ENCODE measurements at regions of chr18 and their contacts with region 1.

Region 1: DNA sequence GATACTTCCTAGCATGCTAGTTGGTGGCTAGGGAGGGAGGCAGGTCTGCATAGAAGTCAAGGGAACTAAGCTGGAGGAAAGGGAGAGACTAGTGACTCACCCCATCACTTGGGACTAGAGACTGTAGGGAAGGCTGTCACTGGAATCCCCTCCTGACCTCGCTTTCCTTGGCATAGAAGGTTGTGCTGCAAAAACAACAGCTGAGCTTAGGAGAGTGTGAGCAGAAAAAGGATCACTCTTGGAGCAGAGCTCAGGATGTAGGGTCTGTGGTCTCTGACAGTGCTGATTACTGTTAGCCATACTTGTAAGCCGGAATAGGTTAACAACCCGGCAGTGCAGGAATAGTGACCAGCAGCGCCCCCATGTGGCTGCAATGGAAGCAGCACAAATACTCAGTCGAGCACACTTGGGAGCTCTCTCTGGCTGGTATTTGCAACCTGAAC is 66.9 kb upstream of the SMAD2 start:
- DNase-seq: peak; percentile 50
- H3K4me3 Mint-ChIP-seq: no peak overlapping the region
- H3K27ac Mint-ChIP-seq: no peak overlapping the region
- H3K4me1 Mint-ChIP-seq: peaks cover 3% of the 10 kb centered on the region
- H3K27me3 Mint-ChIP-seq: peaks cover 5% of the 10 kb centered on the region

Region 2: DNA sequence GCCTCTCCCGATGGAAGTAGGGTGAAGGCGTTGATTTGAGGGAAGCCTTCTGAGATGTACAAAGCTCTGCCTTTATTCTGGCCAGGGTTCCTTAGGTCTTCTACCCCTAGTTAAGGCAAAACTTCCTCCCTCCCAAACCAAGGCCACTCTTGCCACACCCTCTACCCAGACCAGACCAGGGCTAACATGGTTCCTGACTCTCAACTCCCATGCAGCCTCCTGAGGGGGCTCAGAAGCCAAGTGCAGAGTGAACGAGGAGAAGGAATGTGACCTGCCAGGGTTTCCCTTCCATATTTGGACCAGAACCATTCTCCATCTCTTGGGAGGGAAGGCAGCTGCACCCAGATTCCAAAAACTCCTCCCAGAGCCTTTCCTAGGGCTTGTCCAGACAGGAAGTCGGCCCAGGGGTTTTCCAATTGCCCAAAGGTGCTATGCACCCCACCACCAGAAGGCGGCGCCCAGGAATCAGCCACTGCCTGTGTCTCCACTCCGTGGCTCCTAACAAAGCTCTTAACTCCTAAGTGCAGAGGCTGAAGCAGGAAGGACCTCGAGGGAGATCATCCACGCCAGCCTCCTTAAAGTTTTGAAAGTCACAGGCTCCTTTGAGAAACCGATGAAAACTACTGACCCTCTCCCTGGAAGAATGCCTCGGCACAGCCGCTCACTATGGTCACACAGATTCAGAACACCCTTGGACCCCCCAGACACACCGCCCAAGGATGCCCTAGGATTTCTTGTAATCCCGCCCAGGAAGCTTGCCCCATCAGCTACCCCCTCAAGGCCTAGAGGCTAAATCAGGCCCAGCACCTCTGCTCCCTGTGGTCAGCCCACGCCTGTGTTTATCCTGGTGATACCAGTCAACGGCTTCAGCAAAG is 224.7 kb before region 1 on chr18:
- CTCF ChIA-PET with region 1: interaction called, 35 read pairs
- POLR2A ChIA-PET with region 1: no interaction called
- DNase-seq: peak; percentile 57
- H3K4me3 Mint-ChIP-seq: no peak overlapping the region
- H3K27ac Mint-ChIP-seq: no peak overlapping the region
- H3K4me1 Mint-ChIP-seq: no peaks in the 10 kb centered on the region
- H3K27me3 Mint-ChIP-seq: peaks cover 12% of the 10 kb centered on the region

Region 3: DNA sequence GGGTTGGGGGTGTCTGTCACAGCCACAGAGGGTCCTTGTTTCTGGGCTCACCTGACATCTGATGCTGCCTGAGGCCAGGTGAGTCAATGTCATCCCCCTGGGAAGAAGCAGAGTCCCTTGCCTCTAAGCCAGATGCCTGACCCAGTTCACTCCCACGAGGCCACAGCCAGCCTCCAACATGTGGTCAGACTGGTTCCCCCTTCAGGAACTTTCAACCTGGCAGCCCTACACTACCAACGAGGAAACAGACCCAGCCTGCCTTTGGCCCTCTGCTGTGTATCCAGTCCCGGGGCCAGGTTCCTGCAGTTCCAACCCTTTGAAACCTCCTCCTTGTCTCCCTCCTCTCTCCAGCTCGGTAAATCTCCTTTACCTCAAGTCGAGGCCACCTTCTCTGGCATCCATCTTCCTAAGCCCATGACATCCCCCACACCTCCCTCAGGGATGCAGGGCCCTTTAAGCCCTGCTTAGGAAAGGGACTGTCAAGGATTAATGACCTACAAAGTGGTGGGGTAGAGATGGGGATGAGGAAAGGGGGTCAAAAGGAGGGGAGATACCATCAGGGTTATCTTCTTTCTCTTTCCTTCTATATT is 17.7 kb before region 1 on chr18:
- CTCF ChIA-PET with region 1: no interaction called
- POLR2A ChIA-PET with region 1: no interaction called
- DNase-seq: no peak
- H3K4me3 Mint-ChIP-seq: no peak overlapping the region
- H3K27ac Mint-ChIP-seq: no peak overlapping the region
- H3K4me1 Mint-ChIP-seq: peaks cover 3% of the 10 kb centered on the region
- H3K27me3 Mint-ChIP-seq: peaks cover 5% of the 10 kb centered on the region

Region 4: DNA sequence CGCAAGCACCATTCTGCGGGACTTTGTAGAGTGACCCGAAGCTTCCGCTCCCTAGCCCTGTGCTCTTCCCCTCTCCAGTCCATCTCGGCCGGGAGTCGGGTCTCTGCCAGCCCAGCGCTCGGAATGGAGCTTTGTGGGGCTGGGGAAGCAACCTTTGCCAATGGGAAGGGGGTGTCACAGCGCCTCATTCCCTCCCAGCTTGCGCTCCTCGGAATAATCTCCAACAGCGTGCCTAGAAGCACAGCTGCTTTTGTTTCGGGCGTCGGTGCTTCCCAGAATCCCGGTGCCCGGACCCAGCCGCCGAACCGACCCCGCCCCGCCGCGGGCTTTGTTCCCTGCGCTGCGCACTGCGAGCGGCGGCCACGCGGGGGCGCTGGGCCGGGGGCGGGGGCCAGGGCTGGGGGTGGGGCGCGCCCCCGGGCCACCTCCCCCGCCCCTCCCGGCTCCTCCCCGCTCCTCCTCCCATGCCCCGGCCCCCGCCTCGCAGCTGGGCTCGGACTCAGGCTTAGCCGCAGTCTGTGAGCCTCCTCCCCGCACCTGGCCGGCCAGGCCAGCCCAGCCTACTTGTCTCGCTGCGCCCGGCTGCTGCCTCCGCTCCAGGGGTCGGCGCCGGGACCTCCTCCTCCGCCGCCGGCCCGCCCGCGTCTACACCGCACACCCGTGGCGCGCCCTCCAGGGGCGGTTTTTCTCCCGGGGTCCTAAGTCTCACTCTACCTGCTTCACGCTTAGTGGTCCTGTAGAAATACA is 10.8 kb after region 1 on chr18:
- CTCF ChIA-PET with region 1: interaction called, 23 read pairs
- POLR2A ChIA-PET with region 1: no interaction called
- DNase-seq: peak; percentile 44
- H3K4me3 Mint-ChIP-seq: peak overlapping the region; percentile 58
- H3K27ac Mint-ChIP-seq: no peak overlapping the region
- H3K4me1 Mint-ChIP-seq: peaks cover 11% of the 10 kb centered on the region
- H3K27me3 Mint-ChIP-seq: peaks cover 44% of the 10 kb centered on the region

Measured in activated CD4-positive, alpha-beta memory T cell treated with anti-CD3 and anti-CD28 coated beads, Interleukin-2, amount 10 ng/mL, durations not matched to agents 7 days and 5 days (primary cell).